GM18951 (cell line): ENCODE measurements at regions of chr1 and their contacts with region 1.

Region 1: DNA sequence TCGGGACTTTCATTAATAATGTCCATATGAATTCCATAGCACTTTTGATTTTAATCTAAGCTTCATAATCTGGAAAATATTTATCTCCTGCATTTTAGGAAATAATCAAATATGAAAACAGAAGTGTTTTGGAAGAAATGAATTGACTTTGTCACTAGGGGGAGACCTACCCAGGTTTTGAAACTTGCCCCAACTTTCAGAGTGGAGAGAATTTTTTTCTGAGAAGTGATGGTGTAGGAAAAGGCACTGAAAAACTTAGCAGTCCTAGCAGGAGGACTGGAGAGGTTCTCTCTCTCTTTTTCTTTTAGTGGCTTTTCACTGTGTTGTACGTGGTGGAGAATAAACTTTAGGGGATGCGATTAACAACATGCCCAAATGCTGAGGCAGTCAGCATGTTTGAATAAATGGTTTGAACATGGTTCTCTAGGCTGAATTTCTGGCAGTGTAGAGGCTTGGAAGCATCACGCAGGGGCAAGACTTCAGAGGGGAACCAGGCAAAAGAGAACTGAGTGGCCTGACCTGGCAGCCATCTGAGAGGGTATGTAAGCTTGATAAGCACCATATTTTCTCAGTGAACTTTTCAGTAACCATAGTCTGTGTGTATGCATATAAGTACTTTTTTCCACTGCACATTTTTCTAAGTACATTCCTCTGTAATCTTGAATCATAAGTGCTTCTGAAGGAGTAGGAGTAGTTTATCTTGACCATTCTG is 68.3 kb upstream of the NEK7 start:
- POLR2A ChIP-seq: no peak

Region 2: GRCh38 chr1:198465201-198466144 is 377.0 kb after region 1 on chr1:
- in situ Hi-C with region 1: loop called (anchors 25 kb)
- POLR2A ChIP-seq: no peak